ENCODE measurements at regions of chr4 and their contacts with region 1.

Region 1: GRCh38 chr4:102620697-102621497 is 119.7 kb downstream of the NFKB1 start:
- DNase-seq: no peak
- H3K4me3 Mint-ChIP-seq: no peak overlapping the region
- H3K27ac Mint-ChIP-seq: no peak overlapping the region
- H3K4me1 Mint-ChIP-seq: peaks cover 63% of the 10 kb centered on the region
- H3K27me3 Mint-ChIP-seq: no peaks in the 10 kb centered on the region

Region 2: DNA sequence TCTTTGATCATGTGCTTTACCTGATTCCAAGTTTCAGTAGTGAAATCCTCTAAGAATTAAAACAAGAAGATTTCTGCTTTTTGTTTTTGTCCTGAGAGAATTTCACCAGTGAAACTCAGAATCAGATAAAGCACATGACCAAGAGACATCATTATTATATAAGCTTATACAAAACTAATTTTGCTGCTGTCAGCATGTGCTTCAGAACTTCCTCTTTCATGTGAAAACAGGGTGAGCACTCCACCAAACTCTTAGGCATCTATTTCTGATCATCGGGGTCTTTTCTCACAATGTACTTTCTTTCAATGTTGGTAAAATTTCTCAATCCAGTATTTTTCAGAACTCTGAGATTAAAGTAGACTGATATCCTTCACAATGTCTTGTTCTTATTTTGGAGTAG is 427.8 kb before region 1 on chr4:
- intact Hi-C with region 1: no loop called
- DNase-seq: no peak
- H3K4me3 Mint-ChIP-seq: no peak overlapping the region
- H3K27ac Mint-ChIP-seq: no peak overlapping the region
- H3K4me1 Mint-ChIP-seq: no peaks in the 10 kb centered on the region
- H3K27me3 Mint-ChIP-seq: peaks cover 3% of the 10 kb centered on the region

Region 3: GRCh38 chr4:102255454-102255853 is 365.4 kb before region 1 on chr4:
- intact Hi-C with region 1: loop called (anchors 5 kb)
- DNase-seq: no peak
- H3K4me3 Mint-ChIP-seq: no peak overlapping the region
- H3K27ac Mint-ChIP-seq: no peak overlapping the region
- H3K4me1 Mint-ChIP-seq: no peaks in the 10 kb centered on the region
- H3K27me3 Mint-ChIP-seq: no peaks in the 10 kb centered on the region

Region 4: GRCh38 chr4:102449751-102450352 is 171.0 kb before region 1 on chr4:
- intact Hi-C with region 1: loop called (anchors 1 kb)
- DNase-seq: peak; percentile 52
- H3K4me3 Mint-ChIP-seq: no peak overlapping the region
- H3K27ac Mint-ChIP-seq: no peak overlapping the region
- H3K4me1 Mint-ChIP-seq: peaks cover 36% of the 10 kb centered on the region
- H3K27me3 Mint-ChIP-seq: peaks cover under 1% of the 10 kb centered on the region

Region 5: GRCh38 chr4:102868781-102869568 is 248.1 kb after region 1 on chr4 and contains the start of gene CISD2:
- intact Hi-C with region 1: loop called (anchors 2 kb)
- DNase-seq: peak; percentile 91
- H3K4me3 Mint-ChIP-seq: peak within 1 kb of the TSS; percentile 93
- H3K27ac Mint-ChIP-seq: peak within 1 kb of the TSS; percentile 99
- H3K4me1 Mint-ChIP-seq: peaks cover 69% of the 10 kb centered on the region
- H3K27me3 Mint-ChIP-seq: no peaks in the 10 kb centered on the region
- total RNA-seq, gene CISD2: 41.2 and 50.7 TPM in 2 replicates

Region 6: DNA sequence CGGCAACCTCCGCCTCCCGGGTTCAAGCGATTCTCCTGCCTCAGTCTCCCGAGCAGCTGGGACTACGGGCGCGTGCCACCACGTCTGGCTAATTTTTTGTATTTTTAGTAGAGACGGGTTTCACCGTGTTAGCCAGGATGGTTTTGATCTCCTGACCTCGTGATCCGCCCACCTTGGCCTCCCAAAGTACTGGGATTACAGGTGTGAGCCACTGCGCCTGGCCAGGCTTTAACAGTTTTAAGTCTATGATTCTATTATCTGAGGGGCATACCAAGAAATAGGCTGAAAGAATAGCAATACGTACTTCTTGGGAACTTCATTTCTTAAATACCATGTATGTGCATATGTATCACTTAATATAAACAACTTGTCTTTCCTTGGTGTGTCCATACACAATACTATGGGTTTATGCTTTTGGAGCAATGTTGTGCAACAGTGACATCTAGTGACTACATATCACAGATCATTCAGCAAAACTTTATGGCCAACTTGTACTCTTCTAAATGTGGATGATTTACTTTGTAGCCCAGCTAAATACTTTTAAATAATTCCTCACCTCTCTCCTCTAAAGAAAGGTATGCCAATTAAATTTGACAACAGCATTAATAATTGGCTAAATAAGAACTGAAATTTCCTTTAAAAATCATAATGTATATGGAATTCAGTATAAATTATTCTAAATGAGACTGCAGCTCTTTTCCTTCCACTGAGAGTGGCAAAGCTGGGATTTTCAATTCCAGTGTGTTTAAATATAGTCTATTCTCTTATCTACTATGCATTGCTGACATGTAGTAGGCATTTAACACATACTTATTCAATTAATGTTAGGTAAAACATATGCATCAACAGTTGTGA is 388.2 kb after region 1 on chr4:
- intact Hi-C with region 1: loop called (anchors 1 kb)
- DNase-seq: peak; percentile 32
- H3K4me3 Mint-ChIP-seq: no peak overlapping the region
- H3K27ac Mint-ChIP-seq: no peak overlapping the region
- H3K4me1 Mint-ChIP-seq: no peaks in the 10 kb centered on the region
- H3K27me3 Mint-ChIP-seq: peaks cover 4% of the 10 kb centered on the region

Region 7: GRCh38 chr4:103091601-103092223 is 470.8 kb after region 1 on chr4:
- intact Hi-C with region 1: loop called (anchors 1 kb)
- DNase-seq: peak; percentile 27
- H3K4me3 Mint-ChIP-seq: peak overlapping the region; percentile 71
- H3K27ac Mint-ChIP-seq: peak overlapping the region; percentile 73
- H3K4me1 Mint-ChIP-seq: peaks cover 26% of the 10 kb centered on the region
- H3K27me3 Mint-ChIP-seq: no peaks in the 10 kb centered on the region

Measured in activated T-helper 1 cell treated with anti-CD3 and anti-CD28 coated beads, Interleukin-12 subunit alpha, Interleukin-12 subunit beta, Interleukin-2, Interleukin-4 antibody, amounts not matched to agents 30 ng/mL and 10 ng/mL and 1 ng/mL, durations not matched to agents 14 hours and 24 hours and 36 hours (primary cell).